KBM-7 (cell line): ENCODE measurements at regions of chr5 and their contacts with region 1.

Region 1: DNA sequence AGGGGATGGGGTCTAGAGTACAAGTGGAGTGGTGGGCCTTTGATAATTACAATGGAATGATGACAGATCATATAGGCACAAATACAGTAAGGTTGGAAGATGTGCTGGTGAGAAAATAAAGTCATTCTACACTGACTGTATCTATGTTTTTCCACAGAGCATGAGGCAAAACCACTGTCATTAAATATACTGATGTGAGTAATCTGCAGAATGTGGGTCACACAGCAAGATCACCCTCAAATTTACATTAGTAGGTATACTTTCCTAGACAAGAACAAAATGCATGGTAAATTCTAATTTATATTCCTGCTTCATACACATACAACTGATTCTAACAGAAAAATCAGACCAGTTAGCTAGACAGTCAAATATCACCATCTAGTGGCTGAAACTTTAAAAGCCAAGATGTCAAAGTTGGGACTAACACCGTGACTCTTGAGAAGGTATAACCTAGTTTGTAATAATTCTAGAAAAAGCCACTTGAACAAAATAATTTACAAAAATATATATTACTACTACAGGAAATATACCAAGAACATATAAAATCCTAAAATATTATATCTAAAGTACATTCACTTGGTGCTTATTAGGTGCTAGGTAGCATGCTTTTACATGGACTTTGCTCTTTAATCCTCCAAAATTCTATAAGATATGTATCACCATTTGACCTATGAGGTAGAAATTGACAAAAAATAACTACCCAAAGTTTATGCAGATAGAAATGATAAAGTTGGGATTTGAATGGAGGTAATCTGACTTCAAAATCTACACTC is 19.5 kb downstream of the TTC33 start:
- DNase-seq: peak; percentile 73

Region 2: GRCh38 chr5:39599721-39600431 is 1136.4 kb before region 1 on chr5:
- in situ Hi-C with region 1: loop called (anchors 25 kb)
- DNase-seq: peak; percentile 25

Region 3: GRCh38 chr5:39714036-39714698 is 1022.1 kb before region 1 on chr5:
- in situ Hi-C with region 1: loop called (anchors 25 kb)
- DNase-seq: peak; percentile 64

Region 4: DNA sequence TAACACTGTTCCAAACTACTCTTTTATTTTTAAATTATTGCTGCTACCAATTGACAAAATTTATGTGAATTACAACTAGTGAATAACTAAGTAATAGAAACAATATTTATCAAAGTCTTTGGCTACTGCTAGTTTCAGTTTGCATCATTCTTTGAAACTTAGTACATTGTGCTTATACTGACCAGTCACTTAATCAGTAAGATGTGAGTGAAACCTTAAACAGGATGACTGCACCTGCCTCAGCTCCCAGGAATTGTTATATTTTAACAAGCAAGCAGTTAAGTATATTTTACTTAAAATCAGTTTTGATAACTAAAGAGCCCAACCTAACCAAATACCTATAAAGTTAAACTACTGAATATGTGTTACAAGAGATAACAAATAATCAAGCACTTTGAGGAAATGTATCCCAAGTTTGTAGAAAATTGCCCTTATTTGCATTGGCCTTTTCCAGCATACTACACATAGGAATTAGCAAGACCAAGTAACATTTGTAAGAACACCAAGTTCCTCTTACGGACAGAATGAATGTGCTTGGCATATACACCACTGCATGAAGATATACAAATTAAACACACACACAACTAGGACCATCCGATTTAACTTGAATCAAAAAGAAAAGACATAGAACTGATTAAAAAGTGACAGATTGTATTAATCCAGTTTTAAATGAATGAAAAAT is 766.0 kb before region 1 on chr5:
- in situ Hi-C with region 1: loop called (anchors 25 kb)
- DNase-seq: no peak

Region 5: GRCh38 chr5:40916226-40916625 is 179.9 kb after region 1 on chr5:
- in situ Hi-C with region 1: no loop called
- DNase-seq: no peak